CD8-positive, alpha-beta memory T cell (primary cell): ENCODE measurements at regions of chr3 and their contacts with region 1.

Region 1: GRCh38 chr3:67790043-67790442 is 135.6 kb upstream of the SUCLG2 start:
- DNase-seq: peak; percentile 28 to 75 (median 46)
- H3K4me3 ChIP-seq: no peak overlapping the region
- H3K4me3 Mint-ChIP-seq: no peak overlapping the region
- H3K27ac ChIP-seq: no peak overlapping the region
- H3K27ac Mint-ChIP-seq: no peak overlapping the region
- H3K4me1 ChIP-seq: peaks cover 5% of the 10 kb centered on the region
- H3K4me1 Mint-ChIP-seq: peaks cover 4 to 7% (median 4%) of the 10 kb centered on the region in 3 donors
- H3K27me3 ChIP-seq: no peaks in the 10 kb centered on the region
- H3K27me3 Mint-ChIP-seq: peaks cover 2 to 4% of the 10 kb centered on the region in 2 donors

Region 2: DNA sequence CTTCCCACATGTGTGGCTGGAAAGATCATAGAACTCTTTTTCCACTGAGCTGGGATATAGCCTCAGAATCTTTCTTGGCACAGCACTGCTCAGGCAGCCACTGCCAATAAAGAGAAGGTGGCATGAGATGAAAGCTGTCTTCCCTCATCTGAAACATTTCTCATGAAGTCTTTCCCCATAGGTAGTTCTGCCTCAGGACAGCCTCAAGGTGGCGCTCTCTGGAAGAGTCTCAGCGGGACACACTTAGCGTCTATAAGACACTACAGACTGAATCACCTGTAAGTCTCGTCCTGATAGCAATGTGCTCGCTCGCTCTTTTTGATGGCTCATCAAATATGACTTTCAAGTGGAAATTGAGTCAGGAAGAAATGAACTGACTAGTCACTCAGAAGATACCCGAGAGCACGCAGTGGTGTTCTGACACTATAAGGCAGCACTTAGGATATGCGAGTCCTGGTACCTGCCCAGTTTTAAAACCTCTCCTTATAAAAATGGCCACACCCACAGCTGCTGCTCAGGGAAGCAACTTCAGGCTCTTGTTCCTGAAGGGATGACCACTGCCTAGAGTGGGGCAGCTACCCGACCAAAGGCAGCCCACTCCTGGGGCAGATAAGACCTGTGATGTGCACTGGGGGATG is 405.2 kb before region 1 on chr3:
- CTCF ChIA-PET with region 1: interaction called, 38 read pairs
- POLR2A ChIA-PET with region 1: no interaction called
- DNase-seq: peak in 4 of 5 donors; percentile 5 to 56 (median 11)
- H3K4me3 ChIP-seq: no peak overlapping the region
- H3K4me3 Mint-ChIP-seq: no peak overlapping the region
- H3K27ac ChIP-seq: no peak overlapping the region
- H3K27ac Mint-ChIP-seq: peak overlapping the region in 2 of 8 donors; percentile 2 to 79
- H3K4me1 ChIP-seq: no peaks in the 10 kb centered on the region
- H3K4me1 Mint-ChIP-seq: peaks cover 0 to 6% (median 1%) of the 10 kb centered on the region in 3 donors
- H3K27me3 ChIP-seq: no peaks in the 10 kb centered on the region
- H3K27me3 Mint-ChIP-seq: no peaks in the 10 kb centered on the region